Left lung (tissue), 14 donors: ENCODE measurements at regions of chr4 and their contacts with region 1.

Region 1: DNA sequence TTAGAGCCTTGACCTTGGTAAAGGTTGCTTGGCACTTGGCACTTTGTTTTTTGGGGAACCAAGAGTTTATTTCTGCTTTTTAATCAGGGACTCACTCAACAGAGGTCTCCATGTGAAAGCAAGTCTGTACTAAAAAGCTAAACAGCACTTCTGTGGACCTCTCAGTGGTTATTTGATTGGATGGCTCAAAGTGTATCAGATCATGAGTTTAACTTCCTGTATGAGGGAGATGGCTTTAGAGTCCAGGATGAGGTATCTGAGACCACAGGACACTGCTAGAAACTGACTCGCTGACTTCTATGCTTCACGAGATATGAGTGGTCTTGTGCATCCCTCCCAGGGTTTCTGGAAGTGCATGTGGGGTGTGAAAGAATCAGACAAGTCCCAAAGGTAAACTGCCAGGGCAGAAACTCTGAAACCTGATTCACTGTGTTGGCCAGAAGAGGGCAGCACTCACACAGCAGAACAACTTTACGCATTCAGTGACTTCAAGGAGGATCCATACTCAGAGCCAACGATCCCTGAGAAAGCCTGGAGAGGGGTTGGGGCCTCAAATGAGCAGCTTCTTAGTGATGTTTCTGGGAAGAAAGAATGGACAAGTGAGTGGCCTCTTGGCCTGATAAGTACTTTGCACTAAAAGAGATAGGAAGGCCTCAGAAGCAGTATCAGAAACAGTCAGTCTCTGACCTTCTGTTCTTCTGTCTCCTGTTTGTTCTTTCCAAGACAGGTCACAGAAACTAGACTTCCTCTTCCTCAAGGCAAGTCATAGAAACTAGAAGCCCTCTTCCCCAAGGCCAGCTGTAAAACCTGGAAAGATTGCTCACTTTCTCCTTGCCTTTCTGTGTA is 220.3 kb upstream of the CXCL13 start:
- DNase-seq: peak in 3 of 4 donors; percentile 35 to 80 (median 67)
- ATAC-seq: peak; percentile 96
- H3K4me3 ChIP-seq: no peak overlapping the region
- H3K27ac ChIP-seq: no peak overlapping the region
- H3K4me1 ChIP-seq: no peaks in the 10 kb centered on the region
- H3K27me3 ChIP-seq: no peaks in the 10 kb centered on the region
- CTCF ChIP-seq: peak; percentile 72 to 74

Region 2: GRCh38 chr4:77433418-77433733 is 48.0 kb after region 1 on chr4:
- intact Hi-C with region 1: loop called in 1 of 2 experiments (anchors 5 kb)
- DNase-seq: no peak
- ATAC-seq: peak; percentile 90
- H3K4me3 ChIP-seq: no peak overlapping the region
- H3K27ac ChIP-seq: no peak overlapping the region
- H3K4me1 ChIP-seq: peaks cover 6% of the 10 kb centered on the region in 2 donors
- H3K27me3 ChIP-seq: no peaks in the 10 kb centered on the region
- CTCF ChIP-seq: peak; percentile 25 to 46

Region 3: GRCh38 chr4:77618383-77619122 is 233.2 kb after region 1 on chr4:
- intact Hi-C with region 1: loop called in 1 of 2 experiments (anchors 10 kb)
- DNase-seq: peak in 3 of 4 donors; percentile 56 to 83 (median 73)
- ATAC-seq: peak; percentile 99
- H3K4me3 ChIP-seq: no peak overlapping the region
- H3K27ac ChIP-seq: no peak overlapping the region
- H3K4me1 ChIP-seq: peaks cover 0 to 5% of the 10 kb centered on the region in 2 donors
- H3K27me3 ChIP-seq: no peaks in the 10 kb centered on the region
- CTCF ChIP-seq: peak; percentile 77 to 78